Aorta (tissue), 5 donors: ENCODE measurements at regions of chr20 and their contacts with region 1.

Region 1: GRCh38 chr20:63056236-63056948 is 49.6 kb upstream of the BHLHE23 start:
- DNase-seq: peak; percentile 52 to 79
- ATAC-seq: peak; percentile 60
- H3K4me3 ChIP-seq: no peak overlapping the region
- H3K27ac ChIP-seq: no peak overlapping the region
- H3K4me1 ChIP-seq: no peaks in the 10 kb centered on the region
- H3K27me3 ChIP-seq: no peaks in the 10 kb centered on the region

Region 2: DNA sequence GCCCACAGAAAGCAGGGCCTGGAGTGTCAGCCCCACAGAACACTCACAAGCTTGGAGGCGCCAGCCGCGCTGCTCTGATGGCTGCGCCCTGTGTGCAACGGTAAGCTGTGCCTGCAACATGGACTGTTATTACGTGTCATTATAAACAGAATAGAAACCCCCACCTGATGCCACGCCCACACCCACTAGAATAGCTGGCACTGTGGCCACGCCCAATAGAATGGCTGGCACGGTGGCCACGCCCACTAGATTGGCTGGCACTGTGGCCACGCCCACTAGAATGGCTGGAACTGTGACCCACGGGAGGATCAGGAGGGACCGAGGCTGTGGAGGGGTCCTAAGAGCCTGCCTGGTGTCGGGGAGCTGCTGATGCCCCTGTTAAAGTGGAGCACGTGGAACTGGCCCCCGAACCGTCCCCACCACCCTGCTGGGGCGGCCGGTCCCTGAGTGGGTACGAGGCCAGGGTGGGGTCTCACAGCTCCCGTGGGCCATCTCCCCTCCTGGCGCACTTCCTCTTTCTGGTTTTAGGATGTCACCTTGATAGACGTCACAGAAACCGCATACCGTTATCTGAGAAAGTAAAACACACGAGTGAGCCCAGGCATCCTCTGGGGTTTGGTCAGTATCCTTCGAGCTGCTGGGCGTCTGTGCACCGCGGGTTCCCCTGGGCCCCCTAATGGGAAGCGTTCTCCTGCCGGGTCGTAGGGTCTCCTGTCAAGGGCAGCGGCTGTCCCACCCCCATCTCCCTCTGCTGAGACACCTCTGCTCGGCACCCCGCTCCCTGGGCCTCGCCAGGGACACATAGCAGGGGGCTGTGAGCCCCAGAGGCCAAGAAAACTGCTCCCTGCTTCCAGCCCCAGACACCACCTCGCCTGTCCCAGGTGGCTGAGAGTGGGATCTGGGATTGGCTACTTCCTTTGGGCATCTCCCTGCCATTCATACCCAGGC is 78.5 kb before region 1 on chr20:
- intact Hi-C with region 1: no loop called
- DNase-seq: no peak
- ATAC-seq: no peak
- H3K4me3 ChIP-seq: no peak overlapping the region
- H3K27ac ChIP-seq: no peak overlapping the region
- H3K4me1 ChIP-seq: no peaks in the 10 kb centered on the region
- H3K27me3 ChIP-seq: no peaks in the 10 kb centered on the region

Region 3: DNA sequence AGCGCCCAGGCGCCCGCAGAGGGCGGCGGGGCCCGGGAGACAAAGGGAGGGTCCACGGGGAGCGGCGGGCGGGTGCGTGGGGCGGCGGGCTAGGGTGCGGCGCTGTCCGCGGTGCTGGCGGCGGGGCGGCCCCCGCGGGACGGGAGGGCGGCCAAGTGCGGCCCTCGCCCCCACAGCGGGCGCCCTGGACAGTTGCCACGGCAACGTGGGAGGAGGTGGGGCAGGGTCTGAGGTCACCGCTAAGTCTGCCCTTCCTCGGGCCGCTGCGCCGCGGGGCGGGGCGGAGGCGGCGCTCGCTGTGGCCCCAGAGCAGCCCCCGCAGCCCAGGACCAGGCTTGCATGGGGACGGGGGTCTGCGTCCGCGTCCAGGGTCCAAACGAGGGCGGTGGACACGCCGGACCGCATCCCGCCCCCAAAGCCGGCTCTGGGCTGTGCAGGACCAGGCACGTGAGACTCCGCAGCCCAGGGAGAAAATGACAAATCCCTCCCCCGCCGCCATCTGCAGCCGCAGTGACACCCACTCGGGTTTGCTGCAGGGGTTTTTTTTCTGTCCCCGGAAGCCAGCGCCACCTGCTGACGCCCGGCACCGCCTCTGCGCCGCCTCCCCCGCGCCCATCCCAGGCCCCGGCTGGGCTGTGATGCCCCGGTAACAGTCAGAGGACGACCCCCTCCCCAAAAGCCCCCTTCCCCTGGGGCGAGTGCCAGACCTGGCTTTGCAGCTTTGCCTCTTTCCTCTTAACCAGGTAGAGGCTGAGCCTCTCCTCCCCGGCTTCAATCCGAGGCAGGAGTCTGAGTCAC is 122.7 kb after region 1 on chr20:
- intact Hi-C with region 1: loop called (anchors 5 kb)
- DNase-seq: peak in 1 of 2 donors; percentile 59
- ATAC-seq: no peak
- H3K4me3 ChIP-seq: peak overlapping the region in 1 of 2 donors; percentile 4
- H3K27ac ChIP-seq: no peak overlapping the region
- H3K4me1 ChIP-seq: no peaks in the 10 kb centered on the region
- H3K27me3 ChIP-seq: peaks cover 0 to 2% of the 10 kb centered on the region in 2 donors

Region 4: GRCh38 chr20:63230800-63231268 is 174.4 kb after region 1 on chr20:
- intact Hi-C with region 1: loop called (anchors 2 to 5 kb)
- DNase-seq: peak in 1 of 2 donors; percentile 65
- ATAC-seq: peak; percentile 53
- H3K4me3 ChIP-seq: no peak overlapping the region
- H3K27ac ChIP-seq: no peak overlapping the region
- H3K4me1 ChIP-seq: no peaks in the 10 kb centered on the region
- H3K27me3 ChIP-seq: no peaks in the 10 kb centered on the region

Region 5: GRCh38 chr20:63381807-63382322 is 325.5 kb after region 1 on chr20:
- intact Hi-C with region 1: no loop called
- DNase-seq: no peak
- ATAC-seq: no peak
- H3K4me3 ChIP-seq: no peak overlapping the region
- H3K27ac ChIP-seq: no peak overlapping the region
- H3K4me1 ChIP-seq: no peaks in the 10 kb centered on the region
- H3K27me3 ChIP-seq: no peaks in the 10 kb centered on the region